ENCODE measurements at regions of chr19 and their contacts with region 1.

Region 1: GRCh38 chr19:40633207-40633606 is 32.0 kb downstream of the LTBP4 start:
- DNase-seq: no peak
- ATAC-seq: no peak
- H3K4me3 ChIP-seq: no peak overlapping the region
- H3K27ac ChIP-seq: no peak overlapping the region
- H3K4me1 ChIP-seq: peaks cover 2 to 26% of the 10 kb centered on the region in 2 experiments; a peak in 2 of 4 replicates
- H3K27me3 ChIP-seq: no peaks in the 10 kb centered on the region
- CTCF ChIP-seq: no peak
- POLR2A ChIP-seq: no peak
- RAD21 ChIP-seq: no peak

Region 2: GRCh38 chr19:40609561-40610395 is 23.4 kb before region 1 on chr19:
- CTCF ChIA-PET with region 1: interaction called, 32 read pairs
- POLR2A ChIA-PET with region 1: interaction called, 4 read pairs
- RAD21 ChIA-PET with region 1: no interaction called
- intact Hi-C with region 1: no loop called
- DNase-seq: peak; percentile 88
- ATAC-seq: peak; percentile 57
- H3K4me3 ChIP-seq: peak overlapping the region; percentile 61 to 67
- H3K27ac ChIP-seq: peak overlapping the region; percentile 85
- H3K4me1 ChIP-seq: peaks cover 41 to 97% of the 10 kb centered on the region in 2 experiments
- H3K27me3 ChIP-seq: no peaks in the 10 kb centered on the region
- CTCF ChIP-seq: no peak
- POLR2A ChIP-seq: no peak
- RAD21 ChIP-seq: no peak

Region 3: GRCh38 chr19:40646564-40647254 is 13.5 kb after region 1 on chr19:
- CTCF ChIA-PET with region 1: interaction called, 50 read pairs
- POLR2A ChIA-PET with region 1: interaction called, 3 read pairs
- RAD21 ChIA-PET with region 1: no interaction called
- intact Hi-C with region 1: no loop called
- DNase-seq: no peak
- ATAC-seq: peak; percentile 65
- H3K4me3 ChIP-seq: peak overlapping the region; percentile 33 to 55
- H3K27ac ChIP-seq: peak overlapping the region; percentile 83
- H3K4me1 ChIP-seq: peaks cover 33 to 38% of the 10 kb centered on the region in 2 experiments
- H3K27me3 ChIP-seq: no peaks in the 10 kb centered on the region
- CTCF ChIP-seq: no peak
- POLR2A ChIP-seq: no peak
- RAD21 ChIP-seq: no peak

Measured in HCT116 (cell line).